ENCODE measurements at regions of chr18 and their contacts with region 1.

Region 1: GRCh38 chr18:3447895-3448837 is 1.8 kb upstream of the TGIF1 start:
- DNase-seq: no peak
- H3K4me3 ChIP-seq: peak overlapping the region; percentile 81
- CTCF ChIP-seq: peak; percentile 26

Region 2: GRCh38 chr18:3397071-3397745 is 51.0 kb before region 1 on chr18:
- CTCF ChIA-PET with region 1: no interaction called
- POLR2A ChIA-PET with region 1: no interaction called
- DNase-seq: no peak
- H3K4me3 ChIP-seq: no peak overlapping the region
- CTCF ChIP-seq: no peak

Region 3: DNA sequence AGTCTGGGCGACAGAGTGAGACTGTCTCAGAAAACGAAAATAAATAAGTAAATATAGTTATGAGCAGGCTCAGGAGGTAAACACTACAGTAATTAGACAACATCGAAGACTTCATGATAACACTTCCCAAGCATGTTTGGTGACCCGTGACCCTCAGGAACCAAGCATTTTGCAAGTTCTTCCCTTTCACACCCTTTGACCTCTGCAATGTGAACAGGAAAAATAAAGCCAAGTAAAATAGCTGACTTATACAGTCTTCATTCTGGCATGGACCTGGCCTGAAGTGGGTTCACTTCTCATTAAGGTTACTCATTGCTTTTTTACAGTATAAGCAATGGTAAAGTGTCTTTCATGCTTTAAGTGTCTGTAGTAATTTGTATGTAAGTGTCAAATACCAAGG is 13.5 kb before region 1 on chr18:
- CTCF ChIA-PET with region 1: no interaction called
- POLR2A ChIA-PET with region 1: no interaction called
- DNase-seq: no peak
- H3K4me3 ChIP-seq: no peak overlapping the region
- CTCF ChIP-seq: no peak

Region 4: GRCh38 chr18:3466045-3466444 is 17.9 kb after region 1 on chr18:
- CTCF ChIA-PET with region 1: interaction called, 56 read pairs
- POLR2A ChIA-PET with region 1: interaction called, 4 read pairs
- DNase-seq: no peak
- H3K4me3 ChIP-seq: no peak overlapping the region
- CTCF ChIP-seq: no peak

Region 5: DNA sequence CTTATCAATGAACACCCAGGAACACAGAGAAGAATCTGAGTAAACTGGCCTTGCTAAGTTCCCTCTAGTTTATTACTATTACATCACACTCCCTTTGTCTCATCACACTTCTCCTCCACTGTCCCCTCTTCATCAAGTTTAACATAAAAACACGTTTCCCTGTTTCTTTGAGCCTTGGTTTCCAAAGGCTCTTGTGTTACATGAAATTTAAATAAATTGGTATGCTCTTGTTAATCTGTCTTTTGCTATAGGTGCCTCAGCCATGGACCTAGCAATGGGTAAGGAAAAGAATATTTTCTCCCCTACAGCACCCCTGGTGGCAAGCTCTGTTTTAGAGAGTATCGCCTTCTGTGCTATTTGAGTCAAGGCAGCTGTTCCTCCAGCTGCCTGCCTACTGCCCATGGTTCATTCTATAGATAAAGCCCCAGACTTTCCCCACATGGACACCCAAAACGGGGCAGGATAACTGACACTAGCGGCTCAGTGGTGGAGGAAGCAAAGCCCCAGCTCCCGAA is 33.6 kb after region 1 on chr18:
- CTCF ChIA-PET with region 1: no interaction called
- POLR2A ChIA-PET with region 1: no interaction called
- DNase-seq: no peak
- H3K4me3 ChIP-seq: no peak overlapping the region
- CTCF ChIP-seq: peak; percentile 45

Region 6: DNA sequence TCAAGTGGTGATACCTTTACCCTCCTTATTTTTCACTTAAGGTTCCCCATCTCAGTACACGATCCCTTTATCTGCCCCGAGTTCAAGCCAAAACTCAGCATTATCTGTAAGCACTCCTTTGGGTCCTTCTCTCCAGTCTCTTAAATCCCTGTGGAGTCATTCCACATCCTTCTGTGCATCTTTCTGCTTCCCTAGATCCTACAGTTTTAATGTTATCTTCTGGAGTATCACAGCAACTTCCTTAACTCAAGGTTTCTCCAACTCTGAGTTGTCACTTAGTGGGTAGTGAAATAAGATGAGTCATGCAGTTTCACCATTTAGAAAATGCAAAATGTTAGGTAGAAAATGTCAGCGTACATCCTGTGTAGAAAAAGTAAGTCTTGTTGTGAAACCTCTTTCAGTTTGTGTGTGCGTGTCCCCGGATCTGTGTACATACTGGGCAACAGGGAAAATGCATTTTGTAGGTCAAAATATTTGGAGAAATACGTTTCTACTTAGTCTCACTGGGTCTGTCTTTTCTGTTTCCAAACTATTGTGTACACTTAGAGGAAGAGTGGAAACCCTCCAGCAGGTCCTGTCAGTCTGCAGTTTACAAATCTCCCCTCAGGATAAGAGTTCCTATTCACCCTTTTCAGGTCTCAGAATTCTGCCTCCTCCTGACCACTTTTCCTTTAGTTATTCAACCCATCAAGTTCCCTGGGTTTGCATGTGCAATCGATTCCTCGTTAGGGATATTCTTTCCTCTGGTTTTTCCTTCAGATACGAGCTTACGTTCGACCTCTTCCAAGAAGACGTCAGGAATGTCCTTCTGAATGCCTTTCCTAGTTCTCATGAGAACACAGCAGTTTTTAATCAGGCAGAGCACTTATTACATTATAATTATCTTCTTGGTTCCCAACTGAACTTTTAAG is 156.6 kb after region 1 on chr18:
- CTCF ChIA-PET with region 1: interaction called, 6 read pairs
- POLR2A ChIA-PET with region 1: interaction called, 27 read pairs
- DNase-seq: peak; percentile 98
- H3K4me3 ChIP-seq: peak overlapping the region; percentile 56
- CTCF ChIP-seq: no peak